OCI-LY7 (cell line): ENCODE measurements at regions of chr14 and their contacts with region 1.

Region 1: DNA sequence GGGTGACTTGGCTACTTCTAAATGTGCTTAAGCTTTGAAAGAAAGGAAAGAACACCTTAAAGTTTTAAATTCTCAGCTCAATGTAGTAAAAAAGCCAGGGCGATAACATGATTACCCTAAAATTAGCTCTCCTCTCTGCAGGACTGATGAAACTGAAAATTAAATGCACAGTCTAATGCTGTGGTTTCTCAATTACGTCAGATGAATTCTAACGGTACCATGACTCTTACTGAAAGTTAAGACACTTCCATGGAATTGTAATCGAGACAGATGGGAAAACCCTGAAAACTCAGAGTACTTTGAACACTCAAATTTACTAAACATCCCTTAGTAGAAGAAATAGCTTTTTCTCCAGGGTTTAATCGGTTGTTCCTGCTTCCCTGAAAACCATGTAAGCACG is 25.9 kb upstream of the PRKD1 start:
- DNase-seq: no peak
- H3K4me3 ChIP-seq: no peak overlapping the region
- H3K27ac ChIP-seq: no peak overlapping the region
- H3K4me1 ChIP-seq: no peaks in the 10 kb centered on the region
- CTCF ChIP-seq: no peak

Region 2: DNA sequence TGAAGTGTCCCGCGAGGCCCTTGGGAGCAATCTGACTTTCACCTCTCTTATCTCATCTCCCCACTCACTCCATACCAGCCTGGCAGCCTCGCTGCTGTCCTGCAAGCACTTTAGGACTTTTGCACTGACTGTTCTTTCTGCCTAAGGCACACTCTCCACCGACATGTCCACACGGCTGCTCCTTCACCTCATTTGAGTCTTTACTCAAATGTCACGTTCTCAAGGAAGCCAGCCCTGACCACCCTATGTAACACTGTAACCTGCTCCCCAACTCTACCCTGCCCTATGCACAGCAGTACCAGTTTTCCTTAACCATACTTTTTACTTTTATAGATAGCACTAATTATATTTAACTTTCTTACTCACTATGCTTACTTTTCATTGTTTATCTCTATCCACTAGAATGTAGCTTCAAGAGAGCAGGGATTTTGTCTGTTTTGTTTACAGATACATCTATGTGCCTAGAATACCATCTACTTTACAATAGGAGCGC is 57.9 kb before region 1 on chr14:
- CTCF ChIA-PET with region 1: no interaction called
- POLR2A ChIA-PET with region 1: no interaction called
- intact Hi-C with region 1: no loop called
- DNase-seq: no peak
- H3K4me3 ChIP-seq: no peak overlapping the region
- H3K27ac ChIP-seq: no peak overlapping the region
- H3K4me1 ChIP-seq: no peaks in the 10 kb centered on the region
- CTCF ChIP-seq: no peak

Region 3: DNA sequence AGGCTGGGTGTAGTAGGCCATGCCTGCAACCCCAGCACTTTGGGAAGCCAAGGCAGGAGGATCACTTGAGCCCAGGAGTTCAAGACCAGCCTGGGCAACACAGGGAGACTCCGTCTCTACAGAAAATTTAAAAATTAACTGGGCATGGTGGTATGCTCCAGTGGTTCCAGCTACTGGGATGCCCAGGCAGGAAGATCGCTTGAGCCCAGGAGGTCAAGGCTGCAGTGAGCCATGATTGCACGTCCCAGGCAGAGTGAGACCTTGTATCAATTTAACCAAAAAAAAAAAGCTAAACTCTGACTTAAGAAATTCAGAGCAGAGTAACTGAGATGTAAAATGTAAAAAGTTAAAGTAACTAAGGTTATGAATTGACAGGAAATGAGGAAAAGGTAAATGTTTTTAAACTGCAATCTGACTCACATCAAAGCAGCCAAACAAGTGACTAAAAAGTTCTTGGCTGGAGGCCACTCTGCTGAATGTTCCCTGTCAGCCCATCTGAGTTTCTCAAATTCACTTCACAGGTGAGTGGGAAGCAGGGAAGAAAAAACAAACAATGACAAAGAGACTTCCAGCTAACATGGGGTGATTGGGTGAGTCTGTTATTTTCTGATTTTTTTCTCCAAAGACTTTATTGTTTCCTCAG is 47.1 kb before region 1 on chr14:
- CTCF ChIA-PET with region 1: no interaction called
- POLR2A ChIA-PET with region 1: no interaction called
- intact Hi-C with region 1: loop called (anchors 1 kb)
- DNase-seq: no peak
- H3K4me3 ChIP-seq: no peak overlapping the region
- H3K27ac ChIP-seq: no peak overlapping the region
- H3K4me1 ChIP-seq: no peaks in the 10 kb centered on the region
- CTCF ChIP-seq: no peak

Region 4: DNA sequence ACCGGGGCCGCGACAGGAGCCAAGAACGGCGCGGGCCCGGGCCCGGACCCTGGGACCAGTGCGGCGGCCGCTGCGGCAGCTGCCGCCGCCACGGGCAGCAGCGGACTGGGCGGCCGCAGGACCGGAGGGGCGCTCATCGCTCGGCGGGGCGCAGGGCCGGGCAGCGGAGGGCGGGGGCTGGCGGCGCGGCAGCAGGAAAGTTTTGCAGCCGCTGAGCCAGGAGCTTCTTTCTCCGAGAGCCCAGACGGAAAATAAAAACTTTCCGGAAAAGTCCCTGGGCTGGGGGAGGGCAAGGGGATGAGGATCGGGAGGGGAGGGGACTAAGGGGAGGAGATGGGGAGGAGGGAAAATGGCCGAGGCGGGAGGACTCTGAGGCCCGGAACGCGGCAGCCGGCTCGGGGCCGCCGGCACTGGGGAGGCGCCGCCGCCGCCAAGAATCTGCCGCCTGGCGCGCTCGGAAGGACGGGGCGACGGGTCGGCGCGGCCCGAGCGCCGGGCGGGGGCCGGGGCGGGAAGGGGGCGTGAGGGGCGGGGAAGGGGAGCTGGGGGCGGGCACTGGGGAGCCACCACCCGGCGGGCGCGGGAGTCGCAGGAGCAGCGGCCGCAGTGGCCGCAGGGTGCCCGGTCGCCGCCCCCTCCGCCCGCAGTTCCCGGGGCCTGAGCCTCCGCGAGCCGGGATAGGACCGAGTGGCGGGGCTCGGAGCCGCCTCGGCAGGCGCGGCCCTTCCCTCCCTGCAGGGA is 26.0 kb before region 1 on chr14 and contains the start of gene PRKD1:
- CTCF ChIA-PET with region 1: no interaction called
- POLR2A ChIA-PET with region 1: no interaction called
- intact Hi-C with region 1: no loop called
- DNase-seq: no peak
- H3K4me3 ChIP-seq: no peak within 1 kb of the TSS
- H3K27ac ChIP-seq: no peak within 1 kb of the TSS
- H3K4me1 ChIP-seq: no peaks in the 10 kb centered on the region
- CTCF ChIP-seq: no peak
- total RNA-seq, gene PRKD1: not detected in 2 replicates

Region 5: DNA sequence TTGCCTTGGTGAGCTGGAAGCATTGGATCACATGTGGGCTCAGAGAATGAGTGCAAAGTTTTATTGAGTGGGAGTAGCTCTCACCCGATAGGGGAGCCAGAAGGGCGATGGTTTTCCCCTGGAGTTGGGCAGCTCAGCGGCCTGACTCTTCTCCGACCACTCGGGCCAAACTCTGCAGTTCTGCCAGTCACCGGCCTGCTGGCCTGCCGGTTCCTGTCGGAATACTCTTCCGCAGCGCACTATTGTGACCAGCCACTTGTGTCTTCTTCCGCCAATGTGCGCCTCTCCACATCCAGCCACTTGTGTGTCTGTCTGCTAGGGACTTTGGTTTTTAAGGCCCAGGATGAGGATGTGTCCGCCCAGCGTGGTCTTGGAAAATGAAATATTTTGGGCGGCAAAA is 17.6 kb after region 1 on chr14:
- CTCF ChIA-PET with region 1: no interaction called
- POLR2A ChIA-PET with region 1: no interaction called
- intact Hi-C with region 1: no loop called
- DNase-seq: no peak
- H3K4me3 ChIP-seq: no peak overlapping the region
- H3K27ac ChIP-seq: no peak overlapping the region
- H3K4me1 ChIP-seq: no peaks in the 10 kb centered on the region
- CTCF ChIP-seq: no peak

Region 6: GRCh38 chr14:30600922-30601918 is 647.7 kb after region 1 on chr14:
- CTCF ChIA-PET with region 1: no interaction called
- POLR2A ChIA-PET with region 1: no interaction called
- intact Hi-C with region 1: no loop called
- DNase-seq: no peak
- H3K4me3 ChIP-seq: no peak overlapping the region
- H3K27ac ChIP-seq: no peak overlapping the region
- H3K4me1 ChIP-seq: no peaks in the 10 kb centered on the region
- CTCF ChIP-seq: no peak